ENCODE measurements at regions of chr9 and their contacts with region 1.

Region 1: GRCh38 chr9:94681508-94681907 is 42.2 kb upstream of the FBP1 start:
- DNase-seq: peak in 1 of 2 donors; percentile 90
- H3K4me3 ChIP-seq: no peak overlapping the region
- H3K27ac ChIP-seq: peak overlapping the region; percentile 27 to 47
- H3K4me1 ChIP-seq: peaks cover 0 to 12% of the 10 kb centered on the region in 2 donors
- H3K27me3 ChIP-seq: no peaks in the 10 kb centered on the region
- CTCF ChIP-seq: peak; percentile 67 to 78 (median 76)

Region 2: DNA sequence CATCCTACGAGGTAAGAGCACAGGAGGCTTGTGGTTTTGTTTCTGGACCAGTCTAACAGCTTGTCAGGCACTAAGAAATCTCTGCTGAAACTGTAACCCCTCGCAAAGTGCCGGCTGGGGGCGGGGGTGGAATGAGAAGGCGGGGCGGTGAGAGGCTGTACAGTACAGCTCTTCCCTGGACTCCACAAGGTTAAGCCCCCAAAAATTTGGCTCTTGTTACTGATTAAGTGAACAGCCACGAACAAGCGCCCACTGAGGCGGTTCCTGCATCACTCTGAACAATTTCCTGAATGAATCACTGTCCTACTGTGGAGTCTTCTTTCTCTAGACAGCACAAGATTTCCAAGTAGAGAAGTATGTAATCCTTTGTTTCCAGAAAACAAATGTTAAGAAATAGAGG is 94.7 kb before region 1 on chr9:
- intact Hi-C with region 1: no loop called
- DNase-seq: no peak
- H3K4me3 ChIP-seq: no peak overlapping the region
- H3K27ac ChIP-seq: no peak overlapping the region
- H3K4me1 ChIP-seq: no peaks in the 10 kb centered on the region
- H3K27me3 ChIP-seq: no peaks in the 10 kb centered on the region
- CTCF ChIP-seq: no peak

Region 3: GRCh38 chr9:94726495-94727191 is 45.1 kb after region 1 on chr9 and contains the start of gene AOPEP:
- intact Hi-C with region 1: loop called (anchors 5 kb)
- DNase-seq: peak; percentile 89 to 99
- H3K4me3 ChIP-seq: peak within 1 kb of the TSS; percentile 66 to 89
- H3K27ac ChIP-seq: peak within 1 kb of the TSS; percentile 83
- H3K4me1 ChIP-seq: peaks cover 0 to 9% of the 10 kb centered on the region in 2 donors
- H3K27me3 ChIP-seq: no peaks in the 10 kb centered on the region
- CTCF ChIP-seq: no peak
- total RNA-seq, gene AOPEP: 333 TPM

Region 4: GRCh38 chr9:94772639-94773303 is 91.3 kb after region 1 on chr9:
- intact Hi-C with region 1: loop called (anchors 5 kb)
- DNase-seq: no peak
- H3K4me3 ChIP-seq: no peak overlapping the region
- H3K27ac ChIP-seq: peak overlapping the region; percentile 74 to 79
- H3K4me1 ChIP-seq: peaks cover 3 to 11% of the 10 kb centered on the region in 2 donors
- H3K27me3 ChIP-seq: no peaks in the 10 kb centered on the region
- CTCF ChIP-seq: no peak

Region 5: DNA sequence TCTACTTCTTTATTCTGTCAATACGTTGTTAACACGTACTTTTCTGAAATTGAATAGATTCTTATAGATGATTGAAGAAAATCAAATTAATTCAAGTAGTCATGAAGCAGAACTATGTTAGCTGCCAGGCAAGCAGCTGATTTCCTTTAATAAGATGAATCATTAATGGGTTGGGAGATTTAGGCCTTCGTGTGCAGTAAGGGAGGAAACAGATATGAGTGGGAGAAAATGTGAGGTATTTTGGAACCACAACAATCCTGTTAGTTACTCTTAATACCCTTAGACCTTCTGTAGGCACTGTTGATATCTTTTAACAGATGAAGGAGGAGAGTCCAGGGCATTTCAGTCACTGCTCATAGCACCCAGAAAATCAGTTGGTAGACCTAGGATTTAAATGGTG is 166.0 kb after region 1 on chr9:
- intact Hi-C with region 1: loop called (anchors 10 kb)
- DNase-seq: no peak
- H3K4me3 ChIP-seq: no peak overlapping the region
- H3K27ac ChIP-seq: peak overlapping the region; percentile 38 to 57
- H3K4me1 ChIP-seq: peaks cover 4 to 14% of the 10 kb centered on the region in 2 donors
- H3K27me3 ChIP-seq: no peaks in the 10 kb centered on the region
- CTCF ChIP-seq: no peak